GM10248 (cell line): ENCODE measurements at regions of chr1 and their contacts with region 1.

Region 1: DNA sequence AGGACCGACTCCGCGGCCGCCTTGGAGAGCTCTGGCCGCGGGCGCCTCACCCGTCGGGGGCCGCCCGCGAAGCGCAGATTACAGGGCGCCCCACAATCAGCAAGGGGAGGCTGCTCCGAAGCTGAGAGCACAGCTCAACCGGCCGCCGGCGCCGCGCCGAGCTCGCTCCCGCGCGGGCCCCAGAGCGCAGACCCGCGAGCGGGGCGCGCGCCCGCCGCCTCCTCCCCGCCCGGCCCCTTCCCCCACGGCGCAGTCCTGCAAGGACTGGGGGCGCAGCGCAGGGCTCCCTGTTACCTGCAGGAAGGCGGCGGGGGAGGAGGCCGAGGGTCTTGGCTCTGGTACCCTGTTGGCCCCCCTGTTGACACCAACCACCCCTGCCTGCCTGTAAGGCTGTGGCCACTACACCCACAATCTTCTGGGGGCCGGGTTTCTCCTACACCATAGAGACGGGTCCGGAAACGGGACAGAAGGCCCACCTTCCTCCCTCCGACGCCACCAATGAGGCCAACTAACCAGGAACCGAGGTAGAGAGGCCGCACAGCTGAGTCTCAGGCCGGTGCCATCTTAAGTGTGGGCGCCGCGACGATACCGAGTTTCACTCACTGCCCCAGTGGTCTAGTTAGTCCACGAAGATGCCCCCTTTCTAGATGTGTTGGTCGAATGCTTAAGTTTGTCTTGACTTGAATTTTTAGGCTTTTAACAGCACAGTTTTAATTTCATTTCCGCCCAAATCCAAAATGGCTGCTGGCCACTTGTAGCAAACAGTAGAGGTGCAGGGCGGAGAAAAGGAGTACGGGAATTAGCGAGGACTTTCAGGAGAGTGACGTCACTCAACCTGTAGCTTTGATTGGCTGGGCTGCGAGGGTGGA is at the start of gene SCYL3:
- DNase-seq: peak; percentile 90
- CTCF ChIP-seq: no peak

Region 2: DNA sequence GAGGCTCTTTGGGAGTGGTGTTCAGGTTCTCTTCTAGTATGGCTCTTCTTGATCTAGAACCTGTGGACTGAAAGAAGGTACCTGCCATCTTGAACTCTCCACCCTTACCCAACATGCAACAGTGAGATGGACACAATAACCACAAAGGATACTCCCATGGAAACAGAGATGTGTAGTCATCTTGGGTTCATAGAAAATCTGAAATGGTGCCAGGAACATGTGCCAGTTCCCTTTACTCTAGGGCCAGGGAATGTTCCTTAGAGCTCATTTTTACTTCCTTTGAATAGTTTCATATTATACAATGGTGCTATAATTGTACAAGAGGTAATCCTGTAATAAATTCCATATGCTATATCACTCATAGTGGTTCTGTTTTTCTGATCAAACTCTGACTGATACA is 13.2 kb after region 1 on chr1:
- CTCF ChIA-PET with region 1: interaction called, 21 read pairs
- POLR2A ChIA-PET with region 1: interaction called, 4 read pairs
- DNase-seq: no peak
- CTCF ChIP-seq: no peak

Region 3: GRCh38 chr1:169914531-169914930 is 20.8 kb after region 1 on chr1:
- CTCF ChIA-PET with region 1: interaction called, 11 read pairs
- POLR2A ChIA-PET with region 1: no interaction called
- DNase-seq: no peak
- CTCF ChIP-seq: no peak